Adrenal gland (tissue), 19 donors: ENCODE measurements at regions of chr22 and their contacts with region 1.

Region 1: DNA sequence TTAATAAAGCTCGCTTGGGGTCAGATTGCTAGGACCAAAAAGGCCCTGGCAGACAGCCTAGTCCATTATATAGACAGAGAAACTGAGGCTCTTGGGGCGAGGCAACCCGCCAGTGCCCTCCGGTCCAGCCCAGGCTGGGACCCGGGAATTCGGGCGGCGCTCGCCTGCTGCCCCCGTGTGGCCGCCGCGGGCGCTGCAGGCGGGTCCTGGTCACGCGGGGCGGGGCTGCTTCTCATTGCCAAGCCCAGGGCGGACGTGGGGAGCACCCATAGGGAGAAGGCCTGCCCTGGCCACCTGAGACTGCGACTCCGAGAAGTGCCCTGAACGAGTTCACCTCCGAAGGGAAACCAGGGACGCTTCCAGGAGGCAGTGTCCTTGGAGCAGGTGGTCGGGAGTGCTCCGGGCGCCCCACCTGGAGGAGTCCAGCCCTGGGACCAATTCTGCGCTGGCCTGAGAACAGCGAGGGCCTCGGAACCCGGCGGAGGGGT is 36.0 kb upstream of the CSNK1E start:
- DNase-seq: peak; percentile 46 to 79 (median 67)
- H3K4me3 ChIP-seq: no peak overlapping the region
- H3K27ac ChIP-seq: peak overlapping the region in 1 of 5 donors; percentile 5
- H3K4me1 ChIP-seq: peaks cover 0 to 5% of the 10 kb centered on the region in 2 donors
- H3K27me3 ChIP-seq: no peaks in the 10 kb centered on the region
- CTCF ChIP-seq: peak; percentile 77 to 99 (median 93)
- POLR2A ChIP-seq: no peak

Region 2: GRCh38 chr22:38051900-38052862 is 301.0 kb before region 1 on chr22:
- intact Hi-C with region 1: loop called (anchors 5 to 10 kb)
- DNase-seq: peak; percentile 68 to 90 (median 83)
- H3K4me3 ChIP-seq: no peak overlapping the region
- H3K27ac ChIP-seq: no peak overlapping the region
- H3K4me1 ChIP-seq: peaks cover 0 to 7% of the 10 kb centered on the region in 2 donors
- H3K27me3 ChIP-seq: no peaks in the 10 kb centered on the region
- CTCF ChIP-seq: peak; percentile 75 to 94 (median 88)
- POLR2A ChIP-seq: no peak

Region 3: DNA sequence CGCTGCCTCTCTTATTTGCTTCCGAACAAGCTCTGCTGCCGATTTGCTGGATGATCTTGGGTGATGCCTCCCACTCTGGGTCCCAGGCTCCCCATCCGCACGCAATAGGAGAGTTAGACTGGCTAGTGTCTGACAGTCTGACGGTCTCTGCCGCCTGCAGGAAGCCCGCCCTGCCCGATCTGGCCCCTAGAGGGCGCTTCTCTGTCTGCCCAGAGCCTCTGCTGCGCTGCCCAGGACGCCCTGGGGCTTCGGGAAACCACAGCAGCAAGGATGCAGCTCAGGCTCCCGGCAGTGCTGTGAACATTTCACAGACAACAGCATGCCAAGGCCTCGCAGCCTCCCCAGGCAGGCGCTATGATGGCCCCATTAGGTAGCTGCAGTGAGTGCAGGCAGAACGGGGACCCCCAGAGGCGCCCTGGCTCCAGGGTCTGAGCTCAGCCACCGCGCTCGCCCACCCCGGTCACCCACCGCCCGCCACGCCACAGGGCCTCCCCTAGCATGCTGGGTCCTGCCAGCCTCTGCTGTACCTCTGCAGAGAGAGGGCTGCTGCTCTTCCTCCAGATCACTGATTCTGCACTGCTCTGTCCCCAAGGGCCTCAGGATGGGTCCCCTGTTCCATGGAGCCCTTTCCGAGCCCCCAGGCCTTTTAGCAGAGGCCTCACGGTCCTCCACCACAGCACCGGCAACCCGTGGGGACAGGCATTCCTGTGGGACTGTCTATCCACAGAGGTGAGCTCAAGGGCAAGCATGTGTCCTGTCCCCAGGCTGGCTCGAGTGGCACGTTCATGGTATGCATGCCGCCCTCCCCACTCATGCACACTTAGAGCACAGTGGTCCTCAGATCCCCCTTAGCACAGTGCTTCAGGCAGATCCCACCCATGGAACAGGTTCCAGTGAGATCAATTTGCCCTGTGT is 238.4 kb before region 1 on chr22:
- intact Hi-C with region 1: loop called in 1 of 2 experiments (anchors 10 kb)
- DNase-seq: peak; percentile 79 to 95 (median 89)
- H3K4me3 ChIP-seq: no peak overlapping the region
- H3K27ac ChIP-seq: no peak overlapping the region
- H3K4me1 ChIP-seq: peaks cover 0 to 7% of the 10 kb centered on the region in 2 donors
- H3K27me3 ChIP-seq: no peaks in the 10 kb centered on the region
- CTCF ChIP-seq: peak; percentile 80 to 97 (median 90)
- POLR2A ChIP-seq: no peak

Region 4: GRCh38 chr22:38262051-38262795 is 91.0 kb before region 1 on chr22:
- intact Hi-C with region 1: loop called in 1 of 2 experiments (anchors 10 kb)
- DNase-seq: peak in 6 of 7 donors; percentile 65 to 80 (median 76)
- H3K4me3 ChIP-seq: no peak overlapping the region
- H3K27ac ChIP-seq: peak overlapping the region in 2 of 5 donors; percentile 74 to 93
- H3K4me1 ChIP-seq: peaks cover 21 to 81% of the 10 kb centered on the region in 2 donors
- H3K27me3 ChIP-seq: no peaks in the 10 kb centered on the region
- CTCF ChIP-seq: peak; percentile 26 to 62 (median 54)
- POLR2A ChIP-seq: no peak